ENCODE measurements at regions of chr13 and their contacts with region 1.

Region 1: DNA sequence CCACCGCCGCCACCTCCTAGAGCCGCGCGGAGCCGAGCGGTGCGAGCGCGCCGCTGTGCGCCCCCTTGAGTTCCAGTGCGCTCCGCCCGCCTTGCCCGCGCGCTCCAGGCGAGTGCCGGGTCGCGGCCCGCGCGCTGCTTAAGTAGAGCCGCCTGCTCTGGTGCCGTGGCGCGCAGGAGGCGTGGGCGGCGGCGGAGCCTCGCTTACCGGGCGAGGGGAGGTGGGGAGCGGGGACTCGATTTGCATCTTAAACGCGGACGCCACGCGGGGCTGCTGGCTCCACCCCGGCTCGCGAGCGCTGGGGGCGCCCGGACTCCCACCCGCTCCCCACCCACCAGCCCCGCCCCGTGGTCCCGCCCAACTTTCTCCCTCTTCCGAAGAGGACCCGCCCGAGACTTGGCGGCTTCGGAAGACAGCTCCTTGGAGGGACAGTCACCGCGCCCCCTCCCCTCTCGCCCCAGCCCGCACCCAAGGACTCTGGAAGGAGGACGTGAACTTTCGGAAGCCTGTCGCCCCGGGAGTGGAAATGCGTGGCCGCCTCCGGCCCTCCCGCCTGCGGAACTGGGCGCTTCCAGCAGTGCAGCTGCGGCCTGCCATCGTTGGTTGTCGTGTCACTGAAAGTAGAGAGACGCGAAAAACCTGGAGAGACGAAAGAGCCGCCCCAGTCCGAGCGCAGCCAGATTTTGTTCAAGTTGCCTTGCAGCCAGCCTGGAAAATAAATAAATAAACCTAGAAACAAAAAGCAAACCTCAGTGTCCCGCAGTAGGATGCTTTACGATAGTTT is at the start of gene KCTD12:
- H3K4me3 ChIP-seq: peak within 1 kb of the TSS; percentile 65
- H3K27ac ChIP-seq: peak within 1 kb of the TSS; percentile 72; the same call in 1 of the 2 replicates
- H3K4me1 ChIP-seq: no peaks in the 10 kb centered on the region
- CTCF ChIP-seq: no peak

Region 2: DNA sequence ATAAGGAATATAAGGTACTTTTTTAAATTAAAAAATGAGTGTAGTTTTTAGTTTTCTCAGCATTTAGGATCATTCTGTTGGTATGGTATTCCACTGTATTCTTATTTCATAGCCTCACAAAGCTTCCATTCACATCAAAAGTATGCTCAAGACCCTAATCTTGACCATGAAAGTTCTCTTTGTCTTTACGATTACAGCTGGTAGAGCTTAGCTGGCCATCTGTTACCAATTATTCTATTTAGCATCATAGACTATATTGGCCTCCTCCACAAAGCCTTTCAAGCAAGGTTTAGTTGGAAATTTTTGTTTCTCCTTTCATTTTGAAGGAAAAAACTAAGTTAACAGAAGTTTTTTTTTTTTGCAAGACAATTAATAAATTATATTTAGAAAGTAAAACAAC is 245.4 kb before region 1 on chr13:
- CTCF ChIA-PET with region 1: no interaction called
- POLR2A ChIA-PET with region 1: no interaction called
- H3K4me3 ChIP-seq: no peak overlapping the region
- H3K27ac ChIP-seq: no peak overlapping the region
- H3K4me1 ChIP-seq: no peaks in the 10 kb centered on the region
- CTCF ChIP-seq: no peak

Region 3: GRCh38 chr13:76667551-76667950 is 218.9 kb before region 1 on chr13:
- CTCF ChIA-PET with region 1: interaction called, 10 read pairs
- POLR2A ChIA-PET with region 1: no interaction called
- H3K4me3 ChIP-seq: no peak overlapping the region
- H3K27ac ChIP-seq: no peak overlapping the region
- H3K4me1 ChIP-seq: no peaks in the 10 kb centered on the region
- CTCF ChIP-seq: no peak

Region 4: DNA sequence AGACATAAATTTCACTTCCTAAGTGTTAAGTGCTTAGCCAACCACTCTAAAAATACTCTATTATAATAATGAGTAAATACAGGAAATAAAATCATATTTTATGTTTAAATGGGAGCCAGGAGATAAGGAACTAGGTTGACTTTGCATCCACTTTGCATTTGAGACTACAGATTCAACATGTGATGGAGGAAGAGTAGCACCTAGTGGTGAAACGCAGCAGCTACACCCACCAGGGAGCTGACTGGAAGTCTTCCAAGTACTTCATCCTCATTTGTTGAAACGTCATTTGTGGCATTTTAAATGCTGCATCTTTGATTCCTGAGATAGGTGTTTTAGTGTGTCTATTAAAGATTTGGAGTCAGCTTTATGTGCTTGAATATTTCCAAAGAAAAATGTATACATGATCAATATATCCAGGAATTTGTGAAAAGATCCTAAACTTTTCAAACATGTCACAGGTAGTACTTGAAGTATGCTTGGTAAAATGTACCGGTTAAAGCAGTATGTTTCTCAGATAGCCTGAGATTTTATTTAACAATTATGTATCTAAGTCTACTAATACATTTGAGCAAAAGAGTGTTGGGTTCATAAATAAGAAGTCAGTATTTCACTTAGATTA is 17.2 kb after region 1 on chr13:
- CTCF ChIA-PET with region 1: interaction called, 10 read pairs
- POLR2A ChIA-PET with region 1: interaction called, 4 read pairs
- H3K4me3 ChIP-seq: no peak overlapping the region
- H3K27ac ChIP-seq: no peak overlapping the region
- H3K4me1 ChIP-seq: no peaks in the 10 kb centered on the region
- CTCF ChIP-seq: 0 out of 2 replicates have a peak, but pooled peaks have one; percentile 51